OCI-LY7 (cell line): ENCODE measurements at regions of chr11 and their contacts with region 1.

Region 1: GRCh38 chr11:57644748-57645688 is 4.7 kb downstream of the YPEL4 start:
- DNase-seq: peak; percentile 86
- H3K4me3 ChIP-seq: no peak overlapping the region
- H3K27ac ChIP-seq: no peak overlapping the region
- H3K4me1 ChIP-seq: peaks cover 38% of the 10 kb centered on the region
- CTCF ChIP-seq: peak; percentile 97

Region 2: DNA sequence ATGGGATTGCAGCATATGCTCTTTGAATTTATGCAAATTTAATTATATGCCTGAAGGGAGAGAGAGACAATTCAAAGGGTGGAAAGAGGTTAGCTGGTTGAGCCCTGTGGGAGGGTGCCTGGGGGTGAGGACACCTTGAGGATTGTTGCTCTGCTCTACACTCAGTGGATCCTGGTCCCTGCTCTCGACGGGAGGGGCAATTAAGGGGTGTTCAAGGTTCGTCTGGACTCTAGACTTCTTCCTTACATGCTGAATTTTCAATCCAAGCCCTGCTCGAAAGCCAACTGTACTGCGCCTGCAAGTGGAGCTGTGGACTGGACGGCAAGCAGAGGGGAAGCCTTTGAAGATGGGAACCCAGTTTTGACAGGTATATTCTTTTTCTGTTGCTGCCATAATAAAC is 1086.4 kb before region 1 on chr11:
- CTCF ChIA-PET with region 1: no interaction called
- POLR2A ChIA-PET with region 1: no interaction called
- intact Hi-C with region 1: no loop called
- DNase-seq: no peak
- H3K4me3 ChIP-seq: no peak overlapping the region
- H3K27ac ChIP-seq: no peak overlapping the region
- H3K4me1 ChIP-seq: no peaks in the 10 kb centered on the region
- CTCF ChIP-seq: no peak

Region 3: DNA sequence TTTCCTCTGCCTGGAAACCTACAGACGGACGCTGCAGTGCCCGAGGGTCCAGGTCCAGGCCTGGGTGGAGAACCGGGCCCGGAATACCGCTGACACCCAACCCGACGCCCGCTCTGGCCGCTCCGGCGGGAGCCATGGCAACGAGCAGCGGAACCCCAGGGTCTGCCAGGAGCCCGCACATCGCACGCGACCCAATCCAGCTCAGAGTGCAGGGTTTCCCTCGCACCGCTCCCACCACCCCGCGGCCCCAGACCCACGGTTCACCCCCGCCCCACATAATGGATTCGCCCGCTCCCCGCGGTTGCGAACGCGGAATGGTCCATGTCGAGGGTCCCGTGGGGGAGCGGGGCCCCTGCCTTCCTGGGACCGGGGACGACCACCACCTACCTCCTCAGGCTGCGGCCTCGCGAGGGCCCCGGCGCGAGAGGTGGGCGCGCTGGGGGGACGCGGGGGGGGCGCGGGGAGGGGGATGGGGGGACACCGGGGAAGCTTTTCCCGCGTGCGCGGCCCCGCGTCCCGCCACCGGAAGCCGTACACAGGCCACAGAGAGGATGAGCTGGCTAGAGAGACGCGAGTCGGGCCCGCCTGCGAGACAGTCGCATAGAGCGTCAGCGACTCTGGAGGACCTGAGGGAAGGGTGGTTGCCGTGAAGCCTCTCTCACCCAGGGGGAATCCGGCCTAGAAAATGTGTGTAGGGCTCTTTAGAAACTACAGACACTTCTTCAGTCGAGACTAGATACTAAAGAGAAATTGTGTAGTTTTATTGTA is 309.5 kb before region 1 on chr11 and contains the start of gene SSRP1:
- CTCF ChIA-PET with region 1: no interaction called
- POLR2A ChIA-PET with region 1: no interaction called
- intact Hi-C with region 1: loop called (anchors 5 kb)
- DNase-seq: peak; percentile 95
- H3K4me3 ChIP-seq: peak within 1 kb of the TSS; percentile 76
- H3K27ac ChIP-seq: peak within 1 kb of the TSS; percentile 53
- H3K4me1 ChIP-seq: peaks cover 25% of the 10 kb centered on the region
- CTCF ChIP-seq: peak; percentile 31; the same call in 1 of the 2 replicates
- total RNA-seq, gene SSRP1: 146 and 185 TPM in 2 replicates

Region 4: GRCh38 chr11:57456960-57457642 is 187.9 kb before region 1 on chr11:
- CTCF ChIA-PET with region 1: interaction called, 18 read pairs
- POLR2A ChIA-PET with region 1: interaction called, 8 read pairs
- intact Hi-C with region 1: loop called (anchors 1 kb)
- DNase-seq: peak; percentile 74
- H3K4me3 ChIP-seq: no peak overlapping the region
- H3K27ac ChIP-seq: no peak overlapping the region
- H3K4me1 ChIP-seq: peaks cover 27% of the 10 kb centered on the region
- CTCF ChIP-seq: peak; percentile 92

Region 5: GRCh38 chr11:57567515-57568329 is 77.3 kb before region 1 on chr11 and contains the start of gene UBE2L6:
- CTCF ChIA-PET with region 1: interaction called, 19 read pairs
- POLR2A ChIA-PET with region 1: interaction called, 12 read pairs
- intact Hi-C with region 1: loop called (anchors 1 kb)
- DNase-seq: peak; percentile 84
- H3K4me3 ChIP-seq: peak within 1 kb of the TSS; percentile 81
- H3K27ac ChIP-seq: peak within 1 kb of the TSS; percentile 79
- H3K4me1 ChIP-seq: peaks cover 18% of the 10 kb centered on the region
- CTCF ChIP-seq: peak; percentile 95; the same call in 1 of the 2 replicates
- total RNA-seq, gene UBE2L6: 64.7 and 68.9 TPM in 2 replicates

Region 6: DNA sequence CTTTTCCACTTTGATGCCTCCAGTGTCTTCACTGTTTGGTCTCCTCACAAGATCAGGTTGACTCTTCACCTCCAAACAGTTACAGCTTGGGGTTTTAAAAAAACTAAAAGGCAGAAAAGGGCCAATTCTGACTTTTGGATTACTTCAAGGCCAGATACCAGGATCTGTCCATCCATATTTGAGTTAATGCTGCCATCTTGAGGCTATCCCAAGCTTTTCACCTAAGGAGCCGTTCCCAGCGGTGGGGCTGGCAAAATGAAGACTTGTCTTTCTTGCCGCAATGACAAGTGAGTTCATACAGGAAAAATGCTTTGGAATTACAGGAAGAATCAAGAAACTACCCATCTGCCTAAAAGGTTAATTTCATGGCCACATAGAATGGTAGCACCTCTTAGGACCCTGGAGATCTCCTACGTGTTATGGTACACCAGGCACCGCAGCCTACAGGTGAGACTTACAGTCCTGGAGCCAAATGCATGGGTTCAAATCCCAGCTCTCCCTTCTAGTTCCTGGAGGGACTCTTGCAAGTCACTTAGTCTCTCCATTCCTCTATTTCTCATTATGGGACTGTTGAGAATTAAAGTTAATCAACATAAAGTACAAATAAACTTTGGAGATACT is 868.8 kb after region 1 on chr11:
- CTCF ChIA-PET with region 1: no interaction called
- POLR2A ChIA-PET with region 1: no interaction called
- intact Hi-C with region 1: loop called (anchors 5 kb)
- DNase-seq: peak; percentile 41
- H3K4me3 ChIP-seq: no peak overlapping the region
- H3K27ac ChIP-seq: no peak overlapping the region
- H3K4me1 ChIP-seq: no peaks in the 10 kb centered on the region
- CTCF ChIP-seq: peak; percentile 74